ENCODE measurements at regions of chr17 and their contacts with region 1.

Region 1: GRCh38 chr17:42527273-42527703 is 8.8 kb upstream of the NAGLU start:
- DNase-seq: peak; percentile 63
- H3K4me3 ChIP-seq: no peak overlapping the region
- H3K27ac ChIP-seq: no peak overlapping the region
- H3K4me1 ChIP-seq: peaks cover 40% of the 10 kb centered on the region
- H3K27me3 ChIP-seq: no peaks in the 10 kb centered on the region
- CTCF ChIP-seq: peak; percentile 86 to 93

Region 2: DNA sequence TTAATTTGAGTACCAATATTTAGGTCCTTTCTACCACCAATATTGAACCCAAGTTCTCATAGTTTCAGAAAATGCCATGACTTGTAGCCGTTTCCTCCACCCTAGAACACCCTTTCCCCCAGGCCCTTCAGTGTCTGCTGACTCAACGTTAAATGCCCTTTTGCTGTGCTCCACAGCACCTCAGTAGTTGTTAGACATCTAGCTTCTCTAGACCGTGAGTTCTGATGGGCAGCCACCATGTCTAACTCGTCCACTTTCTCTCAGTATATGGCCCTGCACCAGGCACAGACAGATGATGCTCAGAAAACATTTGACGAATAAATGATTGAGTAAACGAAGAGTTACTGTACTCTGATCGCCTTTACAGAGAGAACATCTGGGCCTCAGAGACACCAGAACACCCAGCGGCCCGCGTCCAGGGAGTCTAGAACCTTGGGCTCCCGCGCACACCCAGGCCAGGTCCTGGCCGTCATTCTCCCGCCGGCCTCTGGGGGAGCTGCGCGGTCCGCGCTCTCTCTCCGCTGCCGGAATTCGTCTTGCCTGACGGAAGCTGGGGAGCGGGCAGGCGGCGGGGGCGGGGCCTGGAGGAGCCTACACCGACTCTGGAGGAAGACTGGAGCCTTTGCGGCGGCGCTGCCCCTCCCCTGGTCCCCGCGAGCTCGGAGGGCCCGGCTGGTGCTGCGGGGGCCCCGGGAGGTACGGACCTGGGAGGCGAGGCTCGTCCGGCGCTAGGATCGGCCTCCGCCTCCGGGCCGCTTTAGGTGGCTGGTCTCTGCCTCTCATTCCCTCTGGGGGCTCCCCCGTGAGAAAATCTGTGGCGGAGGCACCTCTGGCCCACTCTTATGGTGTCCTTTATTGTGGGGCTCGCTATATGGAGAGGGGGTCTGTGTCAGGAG is 507.5 kb before region 1 on chr17 and contains the start of gene NKIRAS2:
- CTCF ChIA-PET with region 1: no interaction called
- dilution Hi-C with region 1: no loop called
- in situ Hi-C with region 1: no loop called
- intact Hi-C with region 1: loop called (anchors 10 kb)
- DNase-seq: peak; percentile 87
- H3K4me3 ChIP-seq: peak within 1 kb of the TSS; percentile 79 to 98 (median 90)
- H3K27ac ChIP-seq: peak within 1 kb of the TSS; percentile 66
- H3K4me1 ChIP-seq: peaks cover 31% of the 10 kb centered on the region
- H3K27me3 ChIP-seq: no peaks in the 10 kb centered on the region
- CTCF ChIP-seq: peak; percentile 70 to 87
- total RNA-seq, gene NKIRAS2: 28.1 to 40.2 TPM

Region 3: DNA sequence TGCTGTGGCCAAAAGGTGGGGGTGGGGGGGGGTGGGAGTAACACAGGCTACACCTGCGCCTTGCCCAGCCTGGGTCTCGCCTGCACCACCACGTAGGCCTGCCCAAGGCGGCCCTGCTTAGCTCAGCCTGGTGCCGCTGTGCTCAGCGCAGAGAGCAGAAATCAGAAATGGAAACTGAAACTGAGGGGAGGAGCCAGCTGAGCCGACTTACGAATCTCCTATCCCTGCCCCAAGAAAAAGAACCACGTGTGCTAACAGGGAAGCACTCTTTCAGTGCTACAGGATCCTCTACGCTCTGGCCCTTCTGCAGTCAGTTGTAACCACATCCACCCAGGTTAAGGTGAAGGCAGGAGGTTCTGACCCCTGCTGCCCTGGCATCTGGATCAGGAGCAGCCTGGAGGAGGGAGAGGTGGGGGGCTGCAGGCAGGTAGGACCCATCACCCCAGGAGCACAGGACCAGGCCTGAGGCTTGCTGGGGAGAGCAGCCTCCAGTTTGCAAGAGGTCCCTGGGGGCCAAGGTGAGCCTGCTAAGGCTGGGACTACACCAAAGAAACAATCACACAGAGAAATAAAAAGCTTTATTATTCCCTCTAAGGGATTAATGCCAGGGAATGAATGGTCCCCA is 414.6 kb before region 1 on chr17 and contains the start of gene DHX58:
- CTCF ChIA-PET with region 1: no interaction called
- dilution Hi-C with region 1: no loop called
- in situ Hi-C with region 1: loop called in 1 of 2 experiments (anchors 10 kb)
- intact Hi-C with region 1: no loop called
- DNase-seq: peak; percentile 80
- H3K4me3 ChIP-seq: peak within 1 kb of the TSS; percentile 43 to 62 (median 49)
- H3K27ac ChIP-seq: peak within 1 kb of the TSS; percentile 41
- H3K4me1 ChIP-seq: peaks cover 16% of the 10 kb centered on the region
- H3K27me3 ChIP-seq: no peaks in the 10 kb centered on the region
- CTCF ChIP-seq: no peak
- total RNA-seq, gene DHX58: 11.7 to 12.2 TPM

Region 4: GRCh38 chr17:42183741-42184711 is 343.3 kb before region 1 on chr17:
- CTCF ChIA-PET with region 1: no interaction called
- dilution Hi-C with region 1: loop called (anchors 5 kb)
- in situ Hi-C with region 1: no loop called
- intact Hi-C with region 1: loop called (anchors 1 kb)
- DNase-seq: peak; percentile 12
- H3K4me3 ChIP-seq: peak overlapping the region in 2 of 3 experiments; percentile 35 to 39
- H3K27ac ChIP-seq: no peak overlapping the region
- H3K4me1 ChIP-seq: peaks cover 21% of the 10 kb centered on the region
- H3K27me3 ChIP-seq: peaks cover 12% of the 10 kb centered on the region
- CTCF ChIP-seq: peak; percentile 39 to 47

Region 5: GRCh38 chr17:42405963-42406495 is 121.3 kb before region 1 on chr17:
- CTCF ChIA-PET with region 1: interaction called, 3 read pairs
- dilution Hi-C with region 1: no loop called
- in situ Hi-C with region 1: loop called in 1 of 2 experiments (anchors 5 kb)
- intact Hi-C with region 1: loop called (anchors 1 kb)
- DNase-seq: peak; percentile 26
- H3K4me3 ChIP-seq: no peak overlapping the region
- H3K27ac ChIP-seq: no peak overlapping the region
- H3K4me1 ChIP-seq: peaks cover 50% of the 10 kb centered on the region
- H3K27me3 ChIP-seq: no peaks in the 10 kb centered on the region
- CTCF ChIP-seq: peak; percentile 45 to 76

Region 6: GRCh38 chr17:42472709-42473521 is 54.4 kb before region 1 on chr17:
- CTCF ChIA-PET with region 1: no interaction called
- dilution Hi-C with region 1: loop called (anchors 5 kb)
- in situ Hi-C with region 1: no loop called
- intact Hi-C with region 1: no loop called
- DNase-seq: peak; percentile 19
- H3K4me3 ChIP-seq: no peak overlapping the region
- H3K27ac ChIP-seq: no peak overlapping the region
- H3K4me1 ChIP-seq: peaks cover 3% of the 10 kb centered on the region
- H3K27me3 ChIP-seq: no peaks in the 10 kb centered on the region
- CTCF ChIP-seq: no peak

Region 7: GRCh38 chr17:42502091-42502490 is 25.2 kb before region 1 on chr17:
- CTCF ChIA-PET with region 1: no interaction called
- dilution Hi-C with region 1: no loop called
- in situ Hi-C with region 1: no loop called
- intact Hi-C with region 1: no loop called
- DNase-seq: no peak
- H3K4me3 ChIP-seq: no peak overlapping the region
- H3K27ac ChIP-seq: no peak overlapping the region
- H3K4me1 ChIP-seq: no peaks in the 10 kb centered on the region
- H3K27me3 ChIP-seq: no peaks in the 10 kb centered on the region
- CTCF ChIP-seq: no peak

Region 8: GRCh38 chr17:42577532-42578281 is 50.4 kb after region 1 on chr17 and contains the start of gene PSMC3IP:
- CTCF ChIA-PET with region 1: no interaction called
- dilution Hi-C with region 1: no loop called
- in situ Hi-C with region 1: no loop called
- intact Hi-C with region 1: loop called (anchors 1 kb)
- DNase-seq: peak; percentile 94
- H3K4me3 ChIP-seq: peak within 1 kb of the TSS; percentile 67 to 78 (median 73)
- H3K27ac ChIP-seq: peak within 1 kb of the TSS; percentile 58
- H3K4me1 ChIP-seq: peaks cover 16% of the 10 kb centered on the region
- H3K27me3 ChIP-seq: no peaks in the 10 kb centered on the region
- CTCF ChIP-seq: peak; percentile 9 to 54
- total RNA-seq, gene PSMC3IP: 2.2 to 25.2 TPM